Naive thymus-derived CD8-positive, alpha-beta T cell (primary cell): ENCODE measurements at regions of chr7 and their contacts with region 1.

Region 1: GRCh38 chr7:76047811-76048667 is at the starts of genes MDH2 and STYXL1:
- DNase-seq: peak; percentile 74 to 93 (median 83)
- ATAC-seq: peak; percentile 85 to 91
- H3K4me3 Mint-ChIP-seq: peak within 1 kb of the TSS; percentile 94 to 99 (median 97)
- H3K27ac Mint-ChIP-seq: peak within 1 kb of the TSS; percentile 87 to 98 (median 97)
- H3K4me1 Mint-ChIP-seq: peaks cover 28 to 69% (median 61%) of the 10 kb centered on the region in 4 donors
- H3K27me3 Mint-ChIP-seq: no peaks in the 10 kb centered on the region
- polyA plus RNA-seq, gene MDH2: 131 to 153 (median 149) TPM
- polyA plus RNA-seq, gene STYXL1: 52.7 to 61.9 (median 55.7) TPM

Region 2: DNA sequence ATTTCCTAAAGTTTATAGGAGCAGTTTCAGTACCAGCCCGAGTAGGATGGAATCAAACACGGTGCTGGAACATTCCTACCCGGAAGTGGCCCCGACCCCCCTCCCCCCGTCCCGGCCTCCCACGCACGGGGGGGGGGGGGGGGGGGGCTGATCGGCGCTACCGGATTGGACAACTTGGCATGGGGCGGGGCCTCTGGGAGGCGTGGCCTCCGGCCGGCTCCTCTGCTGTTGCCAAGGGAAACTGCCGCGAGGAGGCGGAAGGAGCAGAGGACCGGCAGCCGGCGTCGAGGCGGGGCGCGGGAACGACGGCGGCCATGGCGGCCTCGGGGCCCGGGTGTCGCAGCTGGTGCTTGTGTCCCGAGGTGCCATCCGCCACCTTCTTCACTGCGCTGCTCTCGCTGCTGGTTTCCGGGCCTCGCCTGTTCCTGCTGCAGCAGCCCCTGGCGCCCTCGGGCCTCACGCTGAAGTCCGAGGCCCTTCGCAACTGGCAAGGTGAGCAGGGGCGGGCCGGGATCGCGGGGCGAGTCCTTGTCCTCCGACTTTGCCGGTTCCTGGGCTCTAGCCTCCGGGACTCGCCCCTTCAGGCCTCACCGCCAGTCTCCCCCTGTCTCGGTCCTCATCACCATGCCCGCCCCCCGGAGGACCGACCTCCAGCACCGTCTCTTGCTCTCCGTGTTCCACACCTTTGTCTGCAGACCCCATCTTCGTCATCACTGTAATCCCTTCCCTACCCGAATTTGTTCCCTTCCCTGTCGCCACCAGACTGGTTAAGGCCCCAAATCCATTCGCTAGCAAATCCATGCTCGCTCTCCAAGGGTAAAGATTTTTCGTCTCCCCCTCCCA is 169.0 kb before region 1 on chr7 and contains the start of gene RHBDD2:
- POLR2A ChIA-PET with region 1: interaction called, 10 read pairs
- DNase-seq: peak; percentile 82 to 98 (median 94)
- ATAC-seq: peak; percentile 90
- H3K4me3 Mint-ChIP-seq: peak within 1 kb of the TSS; percentile 93 to 99 (median 96)
- H3K27ac Mint-ChIP-seq: peak within 1 kb of the TSS; percentile 92 to 98 (median 97)
- H3K4me1 Mint-ChIP-seq: peaks cover 21 to 44% (median 37%) of the 10 kb centered on the region in 4 donors
- H3K27me3 Mint-ChIP-seq: no peaks in the 10 kb centered on the region
- polyA plus RNA-seq, gene RHBDD2: 73.7 to 89.0 (median 73.7) TPM